Tibial artery (tissue), 4 donors: ENCODE measurements at regions of chr6 and their contacts with region 1.

Region 1: GRCh38 chr6:144104898-144105487 is 9.6 kb upstream of the SF3B5 start:
- DNase-seq: no peak
- H3K4me3 ChIP-seq: no peak overlapping the region
- H3K27ac ChIP-seq: no peak overlapping the region
- H3K4me1 ChIP-seq: peaks cover 0 to 7% (median 3%) of the 10 kb centered on the region in 4 donors
- H3K27me3 ChIP-seq: no peaks in the 10 kb centered on the region
- CTCF ChIP-seq: peak; percentile 61 to 75

Region 2: DNA sequence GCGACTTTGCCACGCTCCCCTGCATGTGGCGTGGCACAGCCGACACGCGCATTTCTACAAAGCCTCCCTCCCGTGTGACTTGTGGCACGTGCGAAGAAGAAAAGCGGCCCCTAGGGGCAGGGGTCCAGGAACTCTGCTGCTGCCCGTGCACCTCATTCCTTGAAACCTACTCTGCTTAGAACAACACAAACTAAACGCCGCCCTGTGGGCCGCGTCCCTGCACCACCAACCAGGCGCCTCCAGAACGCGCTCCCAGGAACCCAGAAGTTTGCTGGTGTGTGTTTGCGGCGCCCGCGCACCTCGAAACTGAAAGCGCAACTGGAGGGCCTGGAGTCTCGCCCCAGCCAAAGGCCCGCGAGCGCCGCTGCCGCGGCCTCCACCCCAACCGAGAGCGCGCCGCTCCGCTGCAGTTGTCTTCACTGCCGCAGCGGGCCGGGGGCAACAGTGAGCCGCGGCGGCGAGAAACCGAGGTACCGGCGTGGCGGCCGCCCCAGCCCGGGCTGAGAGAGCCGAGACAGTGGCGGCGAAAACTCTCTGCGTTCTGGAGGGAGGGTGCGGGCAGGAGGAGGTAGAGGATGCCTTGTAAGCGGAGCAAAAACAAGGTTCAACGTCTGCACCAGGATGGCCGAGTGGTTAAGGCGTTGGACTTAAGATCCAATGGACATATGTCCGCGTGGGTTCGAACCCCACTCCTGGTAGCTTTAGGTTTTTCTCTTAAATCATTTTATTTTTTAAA is 111.1 kb after region 1 on chr6:
- intact Hi-C with region 1: loop called (anchors 5 kb)
- DNase-seq: peak; percentile 93 to 98
- H3K4me3 ChIP-seq: peak overlapping the region; percentile 65 to 80
- H3K27ac ChIP-seq: peak overlapping the region; percentile 86 to 92
- H3K4me1 ChIP-seq: peaks cover 0 to 19% (median 12%) of the 10 kb centered on the region in 4 donors
- H3K27me3 ChIP-seq: no peaks in the 10 kb centered on the region
- CTCF ChIP-seq: peak; percentile 80 to 85

Region 3: GRCh38 chr6:144278659-144279314 is 173.8 kb after region 1 on chr6:
- intact Hi-C with region 1: loop called (anchors 10 kb)
- DNase-seq: no peak
- H3K4me3 ChIP-seq: no peak overlapping the region
- H3K27ac ChIP-seq: no peak overlapping the region
- H3K4me1 ChIP-seq: peaks cover 0 to 7% (median 0%) of the 10 kb centered on the region in 4 donors
- H3K27me3 ChIP-seq: no peaks in the 10 kb centered on the region
- CTCF ChIP-seq: no peak

Region 4: DNA sequence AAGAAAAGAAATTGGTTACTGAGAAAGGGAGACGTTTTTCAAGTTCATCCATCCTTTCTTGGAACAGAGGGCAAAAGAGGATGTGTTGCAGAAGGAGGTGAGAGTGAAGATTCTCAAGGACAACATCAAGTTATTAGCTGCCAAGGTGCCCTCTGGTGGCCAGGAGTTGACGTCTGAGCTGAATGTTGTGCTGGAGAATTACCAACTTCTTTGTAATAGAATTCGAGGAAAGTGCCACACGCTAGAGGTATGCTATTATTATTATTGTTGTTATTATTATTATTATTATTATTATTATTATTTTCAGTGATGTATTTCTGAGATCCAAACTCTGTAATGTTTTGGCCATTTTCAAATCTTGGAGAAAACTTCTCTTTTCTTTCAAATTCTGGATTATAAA is 377.1 kb after region 1 on chr6:
- intact Hi-C with region 1: loop called (anchors 5 kb)
- DNase-seq: peak; percentile 76 to 83
- H3K4me3 ChIP-seq: no peak overlapping the region
- H3K27ac ChIP-seq: peak overlapping the region in 1 of 2 donors; percentile 44
- H3K4me1 ChIP-seq: peaks cover 4 to 42% (median 29%) of the 10 kb centered on the region in 4 donors
- H3K27me3 ChIP-seq: no peaks in the 10 kb centered on the region
- CTCF ChIP-seq: peak; percentile 50 to 65